ENCODE measurements at regions of chr17 and their contacts with region 1.

Region 1: GRCh38 chr17:77779711-77780539 is 178.6 kb upstream of the TNRC6C start:
- DNase-seq: peak; percentile 65
- ATAC-seq: peak; percentile 67 to 82

Region 2: DNA sequence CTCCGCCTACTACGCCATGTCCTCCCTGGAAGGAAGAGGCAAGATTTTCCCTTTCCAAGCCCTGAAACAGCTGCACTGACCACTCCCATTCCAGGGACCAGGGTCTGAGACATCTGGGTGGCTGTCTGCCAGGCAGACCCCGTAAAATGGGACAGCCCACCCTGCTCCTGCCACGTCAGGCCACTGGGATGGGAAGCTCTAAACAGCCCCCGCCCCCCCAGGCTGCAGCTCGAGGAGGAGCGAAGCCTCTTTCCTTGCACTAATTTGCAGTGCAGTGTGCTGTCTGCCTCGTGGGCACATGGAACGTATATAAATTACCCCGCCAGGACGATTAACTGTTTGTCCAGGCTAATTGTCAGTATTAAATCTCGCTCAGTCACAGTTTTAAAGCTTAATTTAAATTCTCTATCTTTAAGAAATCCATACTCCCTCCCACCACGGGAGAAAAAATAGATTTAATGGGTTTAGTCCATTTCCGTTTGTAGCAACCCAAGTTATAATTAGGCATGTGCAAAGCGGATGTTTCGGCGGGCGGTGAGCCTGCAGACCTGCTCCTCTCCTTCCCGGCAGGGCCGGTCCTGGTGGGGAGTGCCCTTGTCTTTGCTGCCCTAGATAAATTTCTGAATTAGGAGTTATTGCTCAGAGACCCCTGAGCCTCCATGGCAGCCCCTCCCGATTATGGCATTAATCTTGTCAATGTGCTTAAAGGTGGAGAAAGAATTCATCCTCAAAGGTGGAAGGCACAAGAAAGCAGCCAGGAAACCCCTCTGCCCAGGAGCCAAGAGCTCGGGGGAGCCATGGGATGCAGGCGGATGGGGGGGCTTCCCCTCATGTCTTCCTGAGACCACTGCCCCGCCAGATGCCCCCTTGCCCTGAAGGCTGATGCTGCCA is 89.4 kb before region 1 on chr17:
- intact Hi-C with region 1: no loop called
- DNase-seq: no peak
- ATAC-seq: peak; percentile 28 to 45

Region 3: GRCh38 chr17:78013683-78014467 is 233.9 kb after region 1 on chr17:
- intact Hi-C with region 1: loop called in 1 of 2 experiments (anchors 10 kb)
- DNase-seq: peak; percentile 31
- ATAC-seq: peak; percentile 72 to 73

Measured in left cardiac atrium (tissue), 4 donors.